ENCODE measurements at regions of chr2 and their contacts with region 1.

Region 1: DNA sequence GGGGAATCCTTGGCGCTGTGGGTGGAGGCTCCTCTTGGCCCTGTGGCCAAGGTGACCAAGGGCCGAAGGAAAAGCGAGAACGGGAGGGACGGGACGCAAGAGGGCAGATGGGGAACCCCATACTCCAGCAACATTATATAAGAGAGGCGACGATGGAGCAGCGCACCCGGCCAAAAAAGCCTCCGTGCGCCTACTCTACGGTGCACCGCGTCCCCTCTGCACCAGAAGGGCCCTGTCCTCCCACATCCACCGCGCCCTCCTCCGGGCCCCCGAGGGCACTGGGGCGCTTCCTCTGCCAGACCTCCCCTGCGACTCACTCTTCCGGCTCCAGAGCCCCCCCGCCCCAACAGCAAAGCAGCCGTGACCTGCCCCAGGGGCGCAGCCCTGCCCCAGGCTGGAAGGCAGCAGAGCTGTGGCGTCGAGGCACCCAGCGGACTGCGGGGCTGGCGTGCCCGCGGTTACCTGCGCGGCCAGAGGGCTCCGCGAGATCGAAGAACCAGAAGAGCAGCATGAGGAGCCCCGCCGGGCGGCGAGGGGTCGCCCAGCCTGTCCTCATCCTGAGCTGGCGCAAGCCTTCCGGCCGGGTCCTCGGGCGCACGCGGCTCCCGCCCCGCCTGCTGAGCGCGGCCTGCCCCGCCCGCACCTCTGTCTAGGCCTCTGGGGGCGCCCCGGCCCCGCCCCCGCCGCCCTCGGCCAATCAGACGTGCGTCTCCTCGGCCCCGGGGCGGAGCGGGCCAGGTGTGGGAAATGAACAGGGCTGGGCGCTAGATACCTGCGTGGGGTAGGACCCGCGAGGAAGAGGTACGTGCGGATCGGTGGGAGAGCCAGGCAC is 106.3 kb upstream of the CD302 start:
- DNase-seq: no peak
- ATAC-seq: peak; percentile 82
- H3K4me3 ChIP-seq: peak within 1 kb of the TSS; percentile 94
- H3K27ac ChIP-seq: peak within 1 kb of the TSS; percentile 83
- H3K4me1 ChIP-seq: peaks cover 25% of the 10 kb centered on the region
- H3K27me3 ChIP-seq: no peaks in the 10 kb centered on the region
- CTCF ChIP-seq: 0 out of 6 replicates have a peak, but pooled peaks of 1 of the 3 experiments have one; percentile 0
- EP300 ChIP-seq: no peak
- POLR2A ChIP-seq: peak; percentile 93
- RAD21 ChIP-seq: no peak

Region 2: GRCh38 chr2:159879051-159879604 is 25.2 kb before region 1 on chr2:
- CTCF ChIA-PET with region 1: interaction called, 18 read pairs
- POLR2A ChIA-PET with region 1: interaction called, 840 read pairs
- RAD21 ChIA-PET with region 1: interaction called, 19 read pairs
- SMC1A ChIA-PET with region 1: interaction called, 1,536 read pairs
- in situ Hi-C with region 1: no loop called
- intact Hi-C with region 1: no loop called
- DNase-seq: peak; percentile 77
- ATAC-seq: peak; percentile 88
- H3K4me3 ChIP-seq: no peak overlapping the region
- H3K27ac ChIP-seq: peak overlapping the region; percentile 85
- H3K4me1 ChIP-seq: peaks cover 17% of the 10 kb centered on the region
- H3K27me3 ChIP-seq: no peaks in the 10 kb centered on the region
- CTCF ChIP-seq: no peak
- EP300 ChIP-seq: peak; percentile 89 to 95
- POLR2A ChIP-seq: no peak
- RAD21 ChIP-seq: no peak

Region 3: DNA sequence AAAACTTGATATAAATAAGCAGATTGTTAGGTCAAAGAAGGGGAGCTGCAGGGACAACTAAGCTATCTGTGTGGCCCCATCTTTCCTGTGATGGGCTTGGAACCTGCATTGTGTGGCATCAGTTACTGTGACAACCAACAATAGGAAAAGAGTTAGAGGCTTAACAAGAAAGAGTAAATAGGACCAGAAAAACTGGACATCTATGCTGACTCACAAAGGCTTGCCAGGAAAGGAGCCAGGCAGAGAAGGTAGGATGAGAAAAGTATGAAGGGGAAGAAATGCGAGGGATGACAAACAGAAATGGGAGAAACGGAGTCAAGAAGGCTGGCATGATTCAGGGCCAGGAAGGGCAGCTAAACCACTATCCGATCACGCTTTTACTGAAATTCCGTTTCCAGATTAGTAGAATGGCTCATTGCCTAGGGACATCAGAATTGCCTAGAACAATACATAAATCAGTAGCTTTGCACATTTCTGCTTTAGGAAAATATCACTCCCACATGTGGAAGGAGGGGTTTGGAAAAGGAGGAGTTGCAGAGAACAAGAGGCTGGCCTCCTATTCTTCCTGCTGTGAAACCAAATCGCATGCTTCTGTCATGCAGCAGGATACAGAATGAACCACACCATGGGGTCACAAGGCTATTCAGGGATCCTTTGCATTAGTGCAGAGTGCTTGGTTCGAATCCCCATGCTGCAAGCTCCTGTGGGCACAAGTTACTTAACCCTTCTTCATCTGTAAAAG is 150.8 kb after region 1 on chr2:
- CTCF ChIA-PET with region 1: no interaction called
- POLR2A ChIA-PET with region 1: no interaction called
- RAD21 ChIA-PET with region 1: no interaction called
- SMC1A ChIA-PET with region 1: no interaction called
- in situ Hi-C with region 1: no loop called
- intact Hi-C with region 1: no loop called
- DNase-seq: no peak
- ATAC-seq: no peak
- H3K4me3 ChIP-seq: no peak overlapping the region
- H3K27ac ChIP-seq: no peak overlapping the region
- H3K4me1 ChIP-seq: no peaks in the 10 kb centered on the region
- H3K27me3 ChIP-seq: no peaks in the 10 kb centered on the region; a peak in 2 of 4 replicates
- CTCF ChIP-seq: no peak
- EP300 ChIP-seq: no peak
- POLR2A ChIP-seq: no peak
- RAD21 ChIP-seq: no peak